WTC11 (cell line): ENCODE measurements at regions of chr2 and their contacts with region 1.

Region 1: GRCh38 chr2:232521959-232522622 is 1.9 kb downstream of the PRSS56 start:
- DNase-seq: peak; percentile 71
- ATAC-seq: peak; percentile 14
- H3K4me3 Mint-ChIP-seq: 0 out of 2 replicates have a peak overlapping the region, but pooled peaks have one; percentile 37
- H3K27ac Mint-ChIP-seq: no peak overlapping the region
- H3K4me1 Mint-ChIP-seq: peaks cover 6% of the 10 kb centered on the region; the same call in 1 of the 2 replicates
- H3K27me3 Mint-ChIP-seq: peaks cover 38% of the 10 kb centered on the region
- CTCF ChIP-seq: peak; percentile 96

Region 2: DNA sequence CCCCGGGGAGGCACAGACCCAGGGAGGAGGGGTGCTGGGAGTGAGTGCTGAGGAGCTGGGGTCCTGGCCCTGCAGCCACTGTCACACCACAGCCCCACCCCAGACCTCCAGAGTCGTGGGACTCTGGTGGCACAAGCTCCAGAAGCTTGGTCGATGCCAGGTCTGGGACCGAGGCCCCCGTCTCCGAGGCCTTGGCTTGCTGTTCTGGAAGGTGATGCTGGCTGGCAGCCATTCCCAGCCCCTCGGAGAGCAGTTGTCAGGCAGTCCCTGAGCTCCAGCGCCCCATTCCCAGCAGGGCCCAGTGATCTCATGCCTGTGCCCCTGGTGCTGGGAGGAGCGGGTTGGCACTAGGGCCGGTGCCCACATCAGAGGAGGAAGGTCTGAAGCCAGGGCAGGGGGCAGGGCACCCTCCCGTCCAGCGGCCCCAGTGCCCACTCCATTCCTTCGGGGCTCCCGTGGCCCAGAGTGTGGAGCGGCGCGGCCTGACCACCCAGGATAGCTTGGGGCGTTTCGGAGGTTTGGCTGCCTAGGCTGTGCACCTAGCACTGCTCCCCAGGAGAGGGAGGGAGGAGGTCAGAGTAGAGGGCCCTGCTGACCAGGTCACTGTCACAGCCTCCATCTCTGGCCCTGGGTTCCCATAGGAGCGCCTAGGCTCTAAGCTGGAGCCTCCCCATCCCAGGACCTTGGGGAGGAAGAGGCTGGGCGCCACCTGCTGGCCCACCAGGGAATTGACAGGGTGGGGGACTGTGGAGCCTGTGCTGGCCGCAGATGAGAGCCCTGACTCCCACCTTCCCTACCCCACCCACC is 82.9 kb before region 1 on chr2:
- CTCF ChIA-PET with region 1: interaction called, 42 read pairs
- POLR2A ChIA-PET with region 1: no interaction called
- DNase-seq: peak; percentile 80
- ATAC-seq: peak; percentile 71
- H3K4me3 Mint-ChIP-seq: no peak overlapping the region
- H3K27ac Mint-ChIP-seq: no peak overlapping the region
- H3K4me1 Mint-ChIP-seq: peaks cover 6% of the 10 kb centered on the region
- H3K27me3 Mint-ChIP-seq: peaks cover 3% of the 10 kb centered on the region; the same call in 1 of the 2 replicates
- CTCF ChIP-seq: peak; percentile 59; the same call in 1 of the 2 replicates

Region 3: GRCh38 chr2:232463701-232464543 is 58.2 kb before region 1 on chr2:
- CTCF ChIA-PET with region 1: interaction called, 53 read pairs
- POLR2A ChIA-PET with region 1: no interaction called
- DNase-seq: no peak
- ATAC-seq: no peak
- H3K4me3 Mint-ChIP-seq: no peak overlapping the region
- H3K27ac Mint-ChIP-seq: no peak overlapping the region
- H3K4me1 Mint-ChIP-seq: no peaks in the 10 kb centered on the region
- H3K27me3 Mint-ChIP-seq: peaks cover 4% of the 10 kb centered on the region; the same call in 1 of the 2 replicates
- CTCF ChIP-seq: no peak

Region 4: GRCh38 chr2:232487385-232488096 is 34.5 kb before region 1 on chr2 and contains the start of gene ECEL1:
- CTCF ChIA-PET with region 1: interaction called, 14 read pairs
- POLR2A ChIA-PET with region 1: no interaction called
- DNase-seq: peak; percentile 46
- ATAC-seq: peak; percentile 15
- H3K4me3 Mint-ChIP-seq: peak within 1 kb of the TSS; percentile 67
- H3K27ac Mint-ChIP-seq: no peak within 1 kb of the TSS
- H3K4me1 Mint-ChIP-seq: peaks cover 23% of the 10 kb centered on the region
- H3K27me3 Mint-ChIP-seq: peaks cover 66% of the 10 kb centered on the region
- CTCF ChIP-seq: no peak
- total RNA-seq, gene ECEL1: 21.4 to 23.3 TPM (median 21.9 TPM) in 3 replicates

Region 5: GRCh38 chr2:232511336-232511888 is 10.7 kb before region 1 on chr2:
- CTCF ChIA-PET with region 1: interaction called, 73 read pairs
- POLR2A ChIA-PET with region 1: no interaction called
- DNase-seq: no peak
- ATAC-seq: no peak
- H3K4me3 Mint-ChIP-seq: no peak overlapping the region
- H3K27ac Mint-ChIP-seq: no peak overlapping the region
- H3K4me1 Mint-ChIP-seq: peaks cover 7% of the 10 kb centered on the region; the same call in 1 of the 2 replicates
- H3K27me3 Mint-ChIP-seq: peaks cover 7% of the 10 kb centered on the region; the same call in 1 of the 2 replicates
- CTCF ChIP-seq: no peak